CD8-positive, alpha-beta T cell (primary cell): ENCODE measurements at regions of chr15 and their contacts with region 1.

Region 1: GRCh38 chr15:39580117-39580484 is 778 bp upstream of the THBS1 start:
- DNase-seq: peak; percentile 78 to 93 (median 85)
- ATAC-seq: peak; percentile 89
- H3K4me3 ChIP-seq: peak overlapping the region in 1 of 2 experiments; percentile 57
- H3K4me3 Mint-ChIP-seq: peak overlapping the region; percentile 68
- H3K27ac ChIP-seq: no peak overlapping the region
- H3K27ac Mint-ChIP-seq: no peak overlapping the region
- H3K4me1 ChIP-seq: peaks cover 10% of the 10 kb centered on the region
- H3K4me1 Mint-ChIP-seq: peaks cover 16% of the 10 kb centered on the region
- H3K27me3 ChIP-seq: peaks cover 5 to 8% of the 10 kb centered on the region in 2 experiments
- H3K27me3 Mint-ChIP-seq: peaks cover 47% of the 10 kb centered on the region
- CTCF ChIP-seq: peak; percentile 89

Region 2: DNA sequence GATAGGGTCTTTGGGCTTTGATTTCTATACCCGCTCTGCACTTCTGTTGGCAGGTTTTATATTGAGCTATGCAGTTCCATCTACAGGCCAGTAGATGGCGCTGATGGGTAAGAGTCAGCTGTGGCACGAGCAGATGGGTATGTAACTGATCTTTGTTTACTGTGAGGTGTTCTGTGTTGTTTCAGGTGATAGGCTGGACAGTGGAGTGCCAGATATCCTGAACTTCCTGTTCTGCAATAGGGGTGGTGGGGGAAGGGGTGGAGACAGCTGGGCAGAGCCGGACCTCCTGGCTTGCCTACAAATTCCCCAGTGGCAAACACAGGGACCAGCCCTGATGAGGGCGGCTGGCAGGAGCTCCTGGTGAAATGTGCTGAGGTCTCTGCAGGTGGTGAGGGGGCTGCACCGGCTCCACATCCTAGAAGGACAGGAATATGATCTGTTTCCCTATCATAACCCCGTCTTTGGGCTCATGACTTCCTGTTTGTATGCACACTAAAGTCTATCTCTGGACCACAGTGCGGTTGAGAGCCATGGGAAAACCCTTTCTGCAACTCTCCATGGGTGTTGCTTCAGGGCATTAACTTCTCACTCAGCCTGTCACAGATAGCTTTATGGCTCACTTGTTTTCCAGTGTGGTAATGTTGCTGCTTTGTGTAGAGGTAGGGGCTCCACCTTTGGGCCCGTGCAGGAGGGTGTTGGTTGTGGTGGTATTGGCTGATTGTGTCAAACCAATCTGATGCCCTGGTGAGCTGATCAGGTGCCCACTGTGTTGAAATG is 1139.6 kb before region 1 on chr15:
- CTCF ChIA-PET with region 1: no interaction called
- POLR2A ChIA-PET with region 1: no interaction called
- intact Hi-C with region 1: loop called (anchors 10 kb)
- DNase-seq: peak in 8 of 9 experiments; percentile 24 to 84 (median 51)
- ATAC-seq: peak; percentile 99
- H3K4me3 ChIP-seq: no peak overlapping the region
- H3K4me3 Mint-ChIP-seq: no peak overlapping the region
- H3K27ac ChIP-seq: no peak overlapping the region
- H3K27ac Mint-ChIP-seq: no peak overlapping the region
- H3K4me1 ChIP-seq: peaks cover 4% of the 10 kb centered on the region
- H3K4me1 Mint-ChIP-seq: peaks cover 3% of the 10 kb centered on the region
- H3K27me3 ChIP-seq: no peaks in the 10 kb centered on the region
- H3K27me3 Mint-ChIP-seq: peaks cover 28% of the 10 kb centered on the region
- CTCF ChIP-seq: peak; percentile 98

Region 3: DNA sequence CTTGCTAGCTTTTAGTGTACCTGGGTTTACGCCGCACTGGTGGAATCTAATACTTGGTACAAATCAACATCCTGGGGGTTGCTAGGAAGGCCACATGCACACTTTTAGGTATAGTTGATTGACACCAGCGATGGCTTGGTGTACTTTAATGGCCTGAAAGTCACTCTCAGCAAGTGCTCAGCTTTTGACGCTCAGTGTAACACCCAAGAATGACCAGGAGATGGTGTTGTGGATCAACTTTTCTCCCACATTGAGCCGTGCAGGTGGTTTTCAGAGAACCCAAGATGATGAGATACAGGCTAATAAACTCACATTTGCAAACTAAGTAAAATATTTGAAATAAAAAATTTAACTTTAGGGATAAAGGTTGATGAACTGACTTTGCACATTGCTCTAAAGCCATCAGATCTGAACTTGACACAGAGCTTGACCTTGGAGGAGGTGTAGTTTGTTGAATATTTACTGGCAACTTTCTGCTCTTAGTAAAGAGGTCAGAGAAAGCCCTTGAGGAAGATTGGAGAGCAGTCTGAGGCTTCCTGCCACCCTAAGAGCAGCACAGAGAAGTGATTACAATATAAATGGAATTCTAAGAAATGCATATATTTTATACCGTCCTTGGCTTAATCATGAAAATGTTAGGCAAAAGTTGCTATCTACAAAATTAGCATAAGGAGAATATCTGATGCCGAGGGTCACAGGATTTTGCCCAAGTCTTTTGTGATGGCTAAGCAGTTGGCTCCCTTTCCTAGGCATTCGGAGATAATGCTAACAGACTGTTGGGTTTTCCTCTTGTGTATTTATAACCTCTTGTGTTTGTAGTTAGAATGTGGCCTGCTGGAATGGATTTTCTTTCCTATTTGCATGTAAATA is 872.1 kb before region 1 on chr15:
- CTCF ChIA-PET with region 1: interaction called, 3 read pairs
- POLR2A ChIA-PET with region 1: no interaction called
- intact Hi-C with region 1: loop called (anchors 1 to 5 kb)
- DNase-seq: peak in 5 of 9 experiments; percentile 30 to 71 (median 40)
- ATAC-seq: peak; percentile 89
- H3K4me3 ChIP-seq: no peak overlapping the region
- H3K4me3 Mint-ChIP-seq: no peak overlapping the region
- H3K27ac ChIP-seq: no peak overlapping the region
- H3K27ac Mint-ChIP-seq: no peak overlapping the region
- H3K4me1 ChIP-seq: no peaks in the 10 kb centered on the region
- H3K4me1 Mint-ChIP-seq: no peaks in the 10 kb centered on the region
- H3K27me3 ChIP-seq: no peaks in the 10 kb centered on the region
- H3K27me3 Mint-ChIP-seq: no peaks in the 10 kb centered on the region
- CTCF ChIP-seq: peak; percentile 73

Region 4: GRCh38 chr15:39125904-39126303 is 454.2 kb before region 1 on chr15:
- CTCF ChIA-PET with region 1: interaction called, 15 read pairs
- POLR2A ChIA-PET with region 1: no interaction called
- intact Hi-C with region 1: loop called (anchors 1 kb)
- DNase-seq: peak in 7 of 9 experiments; percentile 10 to 62 (median 22)
- ATAC-seq: no peak
- H3K4me3 ChIP-seq: no peak overlapping the region
- H3K4me3 Mint-ChIP-seq: no peak overlapping the region
- H3K27ac ChIP-seq: no peak overlapping the region
- H3K27ac Mint-ChIP-seq: no peak overlapping the region
- H3K4me1 ChIP-seq: no peaks in the 10 kb centered on the region
- H3K4me1 Mint-ChIP-seq: peaks cover 3% of the 10 kb centered on the region
- H3K27me3 ChIP-seq: no peaks in the 10 kb centered on the region
- H3K27me3 Mint-ChIP-seq: peaks cover 20% of the 10 kb centered on the region
- CTCF ChIP-seq: peak; percentile 59

Region 5: GRCh38 chr15:39594056-39594763 is 14.1 kb after region 1 on chr15:
- CTCF ChIA-PET with region 1: interaction called, 16 read pairs
- POLR2A ChIA-PET with region 1: no interaction called
- intact Hi-C with region 1: no loop called
- DNase-seq: peak in 4 of 9 experiments; percentile 19 to 72 (median 52)
- ATAC-seq: peak; percentile 58
- H3K4me3 ChIP-seq: no peak overlapping the region
- H3K4me3 Mint-ChIP-seq: peak overlapping the region; percentile 20
- H3K27ac ChIP-seq: no peak overlapping the region
- H3K27ac Mint-ChIP-seq: peak overlapping the region; percentile 74
- H3K4me1 ChIP-seq: no peaks in the 10 kb centered on the region
- H3K4me1 Mint-ChIP-seq: peaks cover 4% of the 10 kb centered on the region
- H3K27me3 ChIP-seq: no peaks in the 10 kb centered on the region
- H3K27me3 Mint-ChIP-seq: no peaks in the 10 kb centered on the region
- CTCF ChIP-seq: no peak

Region 6: GRCh38 chr15:39672666-39673065 is 92.6 kb after region 1 on chr15:
- CTCF ChIA-PET with region 1: no interaction called
- POLR2A ChIA-PET with region 1: no interaction called
- intact Hi-C with region 1: no loop called
- DNase-seq: no peak
- ATAC-seq: no peak
- H3K4me3 ChIP-seq: no peak overlapping the region
- H3K4me3 Mint-ChIP-seq: no peak overlapping the region
- H3K27ac ChIP-seq: no peak overlapping the region
- H3K27ac Mint-ChIP-seq: no peak overlapping the region
- H3K4me1 ChIP-seq: no peaks in the 10 kb centered on the region
- H3K4me1 Mint-ChIP-seq: no peaks in the 10 kb centered on the region
- H3K27me3 ChIP-seq: no peaks in the 10 kb centered on the region
- H3K27me3 Mint-ChIP-seq: no peaks in the 10 kb centered on the region
- CTCF ChIP-seq: no peak

Region 7: GRCh38 chr15:39686000-39686613 is 106.0 kb after region 1 on chr15:
- CTCF ChIA-PET with region 1: interaction called, 12 read pairs
- POLR2A ChIA-PET with region 1: no interaction called
- intact Hi-C with region 1: no loop called
- DNase-seq: peak in 6 of 9 experiments; percentile 4 to 71 (median 29)
- ATAC-seq: peak; percentile 49
- H3K4me3 ChIP-seq: no peak overlapping the region
- H3K4me3 Mint-ChIP-seq: no peak overlapping the region
- H3K27ac ChIP-seq: no peak overlapping the region
- H3K27ac Mint-ChIP-seq: no peak overlapping the region
- H3K4me1 ChIP-seq: no peaks in the 10 kb centered on the region
- H3K4me1 Mint-ChIP-seq: no peaks in the 10 kb centered on the region
- H3K27me3 ChIP-seq: no peaks in the 10 kb centered on the region
- H3K27me3 Mint-ChIP-seq: no peaks in the 10 kb centered on the region
- CTCF ChIP-seq: peak; percentile 93